Right cardiac atrium (tissue), 5 donors: ENCODE measurements at regions of chr16 and their contacts with region 1.

Region 1: DNA sequence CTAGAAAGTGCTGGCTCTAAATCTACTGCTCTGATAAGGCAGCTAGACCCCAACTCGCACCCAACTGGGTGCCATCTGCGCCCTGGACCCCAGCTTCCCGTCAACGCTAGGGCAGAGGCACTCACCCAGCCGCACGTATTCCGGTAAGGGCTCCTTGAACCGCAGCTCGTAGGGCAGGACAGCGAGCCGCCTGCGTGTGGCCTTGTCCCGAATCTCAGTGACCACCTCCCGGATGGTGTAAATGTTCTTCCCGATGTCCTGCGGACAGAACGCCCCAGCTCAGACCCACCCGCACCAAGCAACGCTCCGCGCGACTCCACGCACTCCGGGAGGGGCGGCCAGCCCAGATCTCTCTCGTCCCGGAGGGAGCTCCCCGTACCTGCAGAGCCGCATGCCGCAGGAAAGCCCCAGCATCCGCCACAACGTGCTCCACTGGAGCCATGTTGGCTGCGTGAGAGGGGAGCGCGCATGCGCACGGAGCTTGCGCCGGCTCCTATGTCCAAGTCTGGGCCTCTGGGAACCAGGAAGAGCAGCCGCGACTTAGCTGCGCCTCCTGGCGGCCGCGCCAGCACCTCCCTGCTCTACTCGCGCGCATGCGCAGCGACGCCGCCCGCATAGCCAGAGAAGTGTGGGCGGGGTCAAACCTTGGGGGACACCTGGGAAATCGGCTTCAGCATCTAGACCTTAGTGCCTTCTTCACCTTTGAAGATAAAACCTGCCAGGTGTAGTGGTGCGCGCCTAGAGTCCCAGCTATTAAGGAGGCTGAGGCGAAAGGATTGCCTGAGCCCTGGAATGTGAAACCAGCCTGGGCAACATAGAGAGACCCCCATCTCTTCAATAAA is at the start of gene NOB1:
- DNase-seq: peak; percentile 97 to 99 (median 99)
- ATAC-seq: peak; percentile 98
- H3K4me3 ChIP-seq: peak within 1 kb of the TSS; percentile 78
- H3K27ac ChIP-seq: peak within 1 kb of the TSS; percentile 53
- H3K4me1 ChIP-seq: no peaks in the 10 kb centered on the region
- H3K27me3 ChIP-seq: no peaks in the 10 kb centered on the region
- total RNA-seq, gene NOB1: 18.2 to 23.7 (median 20.9) TPM

Region 2: GRCh38 chr16:69513188-69513961 is 241.3 kb before region 1 on chr16:
- intact Hi-C with region 1: no loop called
- DNase-seq: no peak
- ATAC-seq: no peak
- H3K4me3 ChIP-seq: no peak overlapping the region
- H3K27ac ChIP-seq: no peak overlapping the region
- H3K4me1 ChIP-seq: peaks cover under 1% of the 10 kb centered on the region
- H3K27me3 ChIP-seq: no peaks in the 10 kb centered on the region

Region 3: DNA sequence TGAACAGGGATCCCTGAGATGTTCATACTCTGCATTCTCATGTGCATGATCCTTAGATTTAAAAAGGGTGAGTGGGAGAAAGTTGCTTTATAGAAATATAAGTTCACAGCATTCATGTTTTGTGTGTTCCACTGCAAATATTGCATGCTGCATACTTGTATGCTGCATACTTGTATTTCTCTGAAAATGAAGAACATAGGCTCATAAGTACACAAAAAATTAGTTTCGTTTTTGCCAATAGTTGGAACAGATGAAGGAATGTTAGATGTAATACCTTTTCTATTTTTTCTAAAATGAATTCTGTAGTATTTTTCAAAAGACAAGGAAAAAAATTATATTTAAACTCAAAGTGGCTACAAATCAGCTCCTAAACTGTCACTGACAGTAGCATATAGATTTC is 109.9 kb before region 1 on chr16:
- intact Hi-C with region 1: no loop called
- DNase-seq: no peak
- ATAC-seq: no peak
- H3K4me3 ChIP-seq: no peak overlapping the region
- H3K27ac ChIP-seq: no peak overlapping the region
- H3K4me1 ChIP-seq: no peaks in the 10 kb centered on the region
- H3K27me3 ChIP-seq: no peaks in the 10 kb centered on the region

Region 4: DNA sequence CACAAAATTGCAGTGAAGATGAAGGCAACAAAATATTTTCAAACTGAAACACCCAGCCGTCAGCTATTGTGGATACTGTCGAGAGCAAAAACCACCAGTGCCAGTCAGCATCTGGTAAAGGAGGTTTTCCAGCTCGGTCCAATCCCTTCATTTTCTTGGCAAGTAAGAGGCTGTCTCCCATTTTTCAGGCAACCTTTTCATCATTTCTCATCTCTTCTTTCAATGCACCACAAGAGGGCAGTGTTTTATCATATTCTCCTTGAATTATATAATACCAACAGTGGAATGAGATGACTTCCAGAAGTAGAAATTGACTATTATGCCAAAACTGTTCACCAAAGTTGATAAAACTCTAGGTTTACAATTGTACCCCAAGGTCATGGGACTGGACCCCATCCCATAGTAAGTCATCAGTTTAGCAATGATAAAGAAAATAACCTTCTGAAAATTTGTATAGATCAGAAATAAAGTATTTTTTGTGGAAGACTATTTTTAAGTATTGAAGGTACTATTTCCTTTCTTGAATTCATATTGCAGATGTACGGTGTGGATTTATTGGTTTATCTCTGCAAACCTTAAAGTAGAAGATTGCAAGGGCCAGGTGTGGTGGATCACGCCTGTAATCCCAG is 45.1 kb before region 1 on chr16:
- intact Hi-C with region 1: loop called in 3 of 4 experiments (anchors 2 to 5 kb)
- DNase-seq: no peak
- ATAC-seq: peak; percentile 36 to 53
- H3K4me3 ChIP-seq: no peak overlapping the region
- H3K27ac ChIP-seq: no peak overlapping the region
- H3K4me1 ChIP-seq: no peaks in the 10 kb centered on the region
- H3K27me3 ChIP-seq: no peaks in the 10 kb centered on the region

Region 5: DNA sequence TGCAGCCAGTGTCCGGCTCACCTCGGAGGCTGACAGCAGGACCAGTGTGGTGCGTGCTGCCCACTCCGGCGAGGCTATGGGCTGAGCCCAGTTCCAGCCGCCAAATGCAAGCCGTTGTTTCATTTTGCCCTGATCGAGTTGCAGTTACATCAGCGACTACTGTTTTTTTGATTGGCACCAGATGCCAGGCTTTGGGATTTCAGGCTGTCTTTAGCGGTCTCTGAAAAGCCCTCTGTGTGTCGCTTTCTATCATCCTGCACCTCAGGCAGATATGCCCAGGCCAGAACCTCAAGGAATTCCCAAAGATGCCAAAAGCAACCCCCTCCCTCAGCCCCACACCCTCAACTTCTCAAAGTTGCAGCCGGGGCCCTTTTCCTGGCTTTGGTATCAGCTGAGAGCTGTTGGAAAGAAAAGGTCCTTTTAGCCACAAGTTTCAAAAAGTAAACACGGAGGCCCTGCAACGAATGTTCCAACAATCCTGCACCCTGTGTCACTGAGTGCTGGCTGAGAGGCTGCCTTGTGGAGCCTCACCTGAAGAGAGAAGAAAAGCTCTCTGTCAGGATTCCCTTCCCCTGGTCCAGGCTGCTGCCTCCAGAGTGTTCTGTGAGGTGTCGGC is 66.3 kb after region 1 on chr16:
- intact Hi-C with region 1: no loop called
- DNase-seq: no peak
- ATAC-seq: peak in 1 of 2 donors; percentile 63
- H3K4me3 ChIP-seq: no peak overlapping the region
- H3K27ac ChIP-seq: no peak overlapping the region
- H3K4me1 ChIP-seq: peaks cover 7% of the 10 kb centered on the region
- H3K27me3 ChIP-seq: no peaks in the 10 kb centered on the region